ENCODE measurements at regions of chr6 and their contacts with region 1.

Region 1: GRCh38 chr6:32522302-32523047 is 7.6 kb downstream of the HLA-DRB5 start:
- DNase-seq: no peak
- H3K4me3 Mint-ChIP-seq: no peak overlapping the region
- H3K27ac Mint-ChIP-seq: no peak overlapping the region
- H3K4me1 Mint-ChIP-seq: no peaks in the 10 kb centered on the region
- H3K27me3 Mint-ChIP-seq: peaks cover 18% of the 10 kb centered on the region

Region 2: GRCh38 chr6:32558426-32559057 is 36.1 kb after region 1 on chr6:
- intact Hi-C with region 1: loop called (anchors 1 kb)
- DNase-seq: no peak
- H3K4me3 Mint-ChIP-seq: no peak overlapping the region
- H3K27ac Mint-ChIP-seq: no peak overlapping the region
- H3K4me1 Mint-ChIP-seq: no peaks in the 10 kb centered on the region
- H3K27me3 Mint-ChIP-seq: peaks cover 17% of the 10 kb centered on the region

Region 3: GRCh38 chr6:32589598-32590449 is 67.3 kb after region 1 on chr6 and contains the start of gene HLA-DRB1:
- intact Hi-C with region 1: loop called (anchors 2 kb)
- DNase-seq: peak; percentile 19
- H3K4me3 Mint-ChIP-seq: peak within 1 kb of the TSS; percentile 77
- H3K27ac Mint-ChIP-seq: peak within 1 kb of the TSS; percentile 37
- H3K4me1 Mint-ChIP-seq: peaks cover 40% of the 10 kb centered on the region
- H3K27me3 Mint-ChIP-seq: peaks cover 4% of the 10 kb centered on the region
- total RNA-seq, gene HLA-DRB1: 33.1 and 33.7 TPM in 2 replicates

Region 4: DNA sequence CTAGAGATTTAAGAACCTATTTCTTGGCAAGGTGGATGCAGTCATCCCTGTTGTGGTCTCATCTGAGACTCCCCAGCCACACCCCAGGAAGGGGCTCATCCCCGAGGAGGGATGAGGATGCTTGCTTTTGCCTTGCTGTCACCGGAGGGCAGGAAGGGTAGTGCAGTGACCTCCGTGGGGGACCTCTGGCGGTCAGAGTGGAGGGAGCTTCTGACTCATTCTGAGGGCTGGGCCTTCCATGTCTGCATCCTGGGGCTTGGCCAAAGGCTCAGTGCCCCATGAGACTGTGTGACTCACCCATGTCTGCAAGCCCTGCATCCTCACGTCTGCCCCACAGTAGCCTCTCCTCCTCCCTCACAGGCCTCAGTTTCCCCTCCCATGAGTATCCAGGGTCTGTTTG is 1150.3 kb after region 1 on chr6:
- intact Hi-C with region 1: no loop called
- DNase-seq: no peak
- H3K4me3 Mint-ChIP-seq: no peak overlapping the region
- H3K27ac Mint-ChIP-seq: no peak overlapping the region
- H3K4me1 Mint-ChIP-seq: peaks cover 18% of the 10 kb centered on the region
- H3K27me3 Mint-ChIP-seq: peaks cover 3% of the 10 kb centered on the region